GM12878 (cell line): ENCODE measurements at regions of chr14 and their contacts with region 1.

Region 1: GRCh38 chr14:24431569-24432258 is 2.0 kb downstream of the KHNYN start:
- DNase-seq: peak; percentile 76
- ATAC-seq: peak; percentile 79
- H3K4me3 ChIP-seq: peak overlapping the region; percentile 93
- H3K27ac ChIP-seq: peak overlapping the region; percentile 92
- H3K4me1 ChIP-seq: peaks cover 13% of the 10 kb centered on the region
- H3K27me3 ChIP-seq: no peaks in the 10 kb centered on the region
- CTCF ChIP-seq: peak; percentile 95 to 98 (median 98)
- EP300 ChIP-seq: 0 out of 4 replicates have a peak, but pooled peaks of 1 of the 2 experiments have one; percentile 10
- POLR2A ChIP-seq: peak; percentile 45
- RAD21 ChIP-seq: peak; percentile 91

Region 2: GRCh38 chr14:24271134-24271833 is 160.4 kb before region 1 on chr14 and contains the start of gene RABGGTA:
- CTCF ChIA-PET with region 1: interaction called, 13 read pairs
- POLR2A ChIA-PET with region 1: interaction called, 8 read pairs
- RAD21 ChIA-PET with region 1: no interaction called
- SMC1A ChIA-PET with region 1: interaction called, 6 read pairs
- in situ Hi-C with region 1: no loop called
- intact Hi-C with region 1: no loop called
- DNase-seq: peak; percentile 80
- ATAC-seq: peak; percentile 89
- H3K4me3 ChIP-seq: peak within 1 kb of the TSS; percentile 88
- H3K27ac ChIP-seq: peak within 1 kb of the TSS; percentile 99
- H3K4me1 ChIP-seq: peaks cover 25% of the 10 kb centered on the region
- H3K27me3 ChIP-seq: no peaks in the 10 kb centered on the region
- CTCF ChIP-seq: peak; percentile 84 to 93 (median 86); a peak in 5 of 6 replicates
- EP300 ChIP-seq: no peak
- POLR2A ChIP-seq: peak; percentile 93
- RAD21 ChIP-seq: 0 out of 2 replicates have a peak, but pooled peaks have one; percentile 25
- polyA plus RNA-seq, gene RABGGTA: 38.2 to 38.6 TPM

Region 3: GRCh38 chr14:24321212-24321975 is 110.3 kb before region 1 on chr14:
- CTCF ChIA-PET with region 1: interaction called, 452 read pairs
- POLR2A ChIA-PET with region 1: no interaction called
- RAD21 ChIA-PET with region 1: interaction called, 26 read pairs
- SMC1A ChIA-PET with region 1: interaction called, 5 read pairs
- in situ Hi-C with region 1: no loop called
- intact Hi-C with region 1: no loop called
- DNase-seq: no peak
- ATAC-seq: no peak
- H3K4me3 ChIP-seq: no peak overlapping the region
- H3K27ac ChIP-seq: no peak overlapping the region
- H3K4me1 ChIP-seq: no peaks in the 10 kb centered on the region
- H3K27me3 ChIP-seq: no peaks in the 10 kb centered on the region
- CTCF ChIP-seq: no peak
- EP300 ChIP-seq: no peak
- POLR2A ChIP-seq: no peak
- RAD21 ChIP-seq: no peak

Region 4: GRCh38 chr14:24339284-24340151 is 92.2 kb before region 1 on chr14 and contains the start of gene RIPK3:
- CTCF ChIA-PET with region 1: interaction called, 452 read pairs
- POLR2A ChIA-PET with region 1: interaction called, 42 read pairs
- RAD21 ChIA-PET with region 1: interaction called, 141 read pairs
- SMC1A ChIA-PET with region 1: interaction called, 77 read pairs
- in situ Hi-C with region 1: loop called (anchors 5 kb)
- intact Hi-C with region 1: no loop called
- DNase-seq: peak; percentile 36
- ATAC-seq: peak; percentile 95
- H3K4me3 ChIP-seq: peak within 1 kb of the TSS; percentile 93
- H3K27ac ChIP-seq: peak within 1 kb of the TSS; percentile 34; the same call in 1 of the 2 replicates
- H3K4me1 ChIP-seq: peaks cover 6% of the 10 kb centered on the region; the same call in 1 of the 2 replicates
- H3K27me3 ChIP-seq: peaks cover 0 to 3% of the 10 kb centered on the region in 2 experiments; a peak in 1 of 4 replicates
- CTCF ChIP-seq: no peak
- EP300 ChIP-seq: no peak
- POLR2A ChIP-seq: peak; percentile 63
- RAD21 ChIP-seq: no peak
- polyA plus RNA-seq, gene RIPK3: 2.0 to 2.7 TPM

Region 5: GRCh38 chr14:24395609-24396582 is 35.8 kb before region 1 on chr14:
- CTCF ChIA-PET with region 1: interaction called, 10 read pairs
- POLR2A ChIA-PET with region 1: no interaction called
- RAD21 ChIA-PET with region 1: interaction called, 3 read pairs
- SMC1A ChIA-PET with region 1: no interaction called
- in situ Hi-C with region 1: no loop called
- intact Hi-C with region 1: no loop called
- DNase-seq: no peak
- ATAC-seq: peak; percentile 61
- H3K4me3 ChIP-seq: no peak overlapping the region
- H3K27ac ChIP-seq: no peak overlapping the region
- H3K4me1 ChIP-seq: no peaks in the 10 kb centered on the region
- H3K27me3 ChIP-seq: peaks cover 4 to 8% of the 10 kb centered on the region in 2 experiments; a peak in 3 of 4 replicates
- CTCF ChIP-seq: no peak
- EP300 ChIP-seq: no peak
- POLR2A ChIP-seq: no peak
- RAD21 ChIP-seq: no peak

Region 6: GRCh38 chr14:24442273-24443052 is 10.7 kb after region 1 on chr14 and contains the start of gene SDR39U1:
- CTCF ChIA-PET with region 1: interaction called, 46 read pairs
- POLR2A ChIA-PET with region 1: interaction called, 38 read pairs
- RAD21 ChIA-PET with region 1: interaction called, 36 read pairs
- SMC1A ChIA-PET with region 1: interaction called, 17 read pairs
- in situ Hi-C with region 1: no loop called
- intact Hi-C with region 1: no loop called
- DNase-seq: peak; percentile 99
- ATAC-seq: peak; percentile 93
- H3K4me3 ChIP-seq: peak within 1 kb of the TSS; percentile 93
- H3K27ac ChIP-seq: peak within 1 kb of the TSS; percentile 96
- H3K4me1 ChIP-seq: peaks cover 6% of the 10 kb centered on the region
- H3K27me3 ChIP-seq: no peaks in the 10 kb centered on the region
- CTCF ChIP-seq: no peak
- EP300 ChIP-seq: no peak
- POLR2A ChIP-seq: peak; percentile 90
- RAD21 ChIP-seq: no peak
- polyA plus RNA-seq, gene SDR39U1: 14.0 to 26.4 TPM

Region 7: GRCh38 chr14:24508155-24508840 is 76.6 kb after region 1 on chr14 and contains the start of gene CMA1:
- CTCF ChIA-PET with region 1: no interaction called
- POLR2A ChIA-PET with region 1: no interaction called
- RAD21 ChIA-PET with region 1: no interaction called
- SMC1A ChIA-PET with region 1: no interaction called
- in situ Hi-C with region 1: no loop called
- intact Hi-C with region 1: no loop called
- DNase-seq: no peak
- ATAC-seq: 0 out of 3 replicates have a peak, but pooled peaks have one; percentile 29
- H3K4me3 ChIP-seq: no peak within 1 kb of the TSS
- H3K27ac ChIP-seq: no peak within 1 kb of the TSS
- H3K4me1 ChIP-seq: no peaks in the 10 kb centered on the region; the same call in 1 of the 2 replicates
- H3K27me3 ChIP-seq: no peaks in the 10 kb centered on the region
- CTCF ChIP-seq: no peak
- EP300 ChIP-seq: no peak
- POLR2A ChIP-seq: no peak
- RAD21 ChIP-seq: no peak
- polyA plus RNA-seq, gene CMA1: not detected

Region 8: GRCh38 chr14:24851837-24852236 is 420.1 kb after region 1 on chr14:
- CTCF ChIA-PET with region 1: no interaction called
- POLR2A ChIA-PET with region 1: no interaction called
- RAD21 ChIA-PET with region 1: no interaction called
- SMC1A ChIA-PET with region 1: no interaction called
- in situ Hi-C with region 1: no loop called
- intact Hi-C with region 1: no loop called
- DNase-seq: no peak
- ATAC-seq: no peak
- H3K4me3 ChIP-seq: no peak overlapping the region
- H3K27ac ChIP-seq: no peak overlapping the region
- H3K4me1 ChIP-seq: no peaks in the 10 kb centered on the region
- H3K27me3 ChIP-seq: no peaks in the 10 kb centered on the region
- CTCF ChIP-seq: no peak
- EP300 ChIP-seq: no peak
- POLR2A ChIP-seq: no peak
- RAD21 ChIP-seq: no peak